Ascending aorta (tissue), 2 donors: ENCODE measurements at regions of chr9 and their contacts with region 1.

Region 1: DNA sequence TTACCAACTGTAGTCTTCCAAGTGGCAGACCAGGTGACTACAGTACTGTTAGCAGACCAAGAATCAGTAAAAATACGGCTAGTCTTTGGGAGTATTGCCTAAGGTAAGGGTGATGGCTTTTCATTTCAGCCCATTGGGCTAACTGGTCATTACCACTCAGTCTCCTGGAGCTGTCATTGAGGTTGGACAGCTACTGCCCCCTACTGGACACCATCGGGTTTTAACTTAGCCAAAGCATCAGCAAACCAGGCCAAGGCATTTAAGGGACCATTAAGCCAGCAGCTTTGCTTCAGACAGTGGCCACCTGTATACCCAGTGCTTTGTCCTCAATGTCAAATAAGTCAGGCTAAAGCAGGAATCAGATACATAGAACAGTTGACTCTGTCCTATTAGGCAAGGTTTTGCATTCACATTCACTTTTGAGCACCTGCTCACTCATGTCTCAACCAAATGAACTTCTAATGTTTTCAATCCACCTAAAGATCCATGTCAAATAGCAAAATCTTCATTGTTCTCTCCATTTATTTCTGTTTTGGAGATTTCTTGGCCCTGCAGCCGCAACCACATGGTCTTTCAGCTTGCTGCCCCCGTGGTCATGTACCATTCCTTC is 117.2 kb downstream of the INVS start:
- DNase-seq: peak in 1 of 2 donors; percentile 68
- H3K4me3 ChIP-seq: no peak overlapping the region
- H3K27ac ChIP-seq: no peak overlapping the region
- H3K4me1 ChIP-seq: no peaks in the 10 kb centered on the region
- H3K27me3 ChIP-seq: no peaks in the 10 kb centered on the region
- CTCF ChIP-seq: peak; percentile 21 to 56 (median 36)

Region 2: GRCh38 chr9:100028201-100028784 is 188.0 kb before region 1 on chr9:
- intact Hi-C with region 1: loop called (anchors 5 kb)
- DNase-seq: peak in 1 of 2 donors; percentile 77
- H3K4me3 ChIP-seq: no peak overlapping the region
- H3K27ac ChIP-seq: no peak overlapping the region
- H3K4me1 ChIP-seq: no peaks in the 10 kb centered on the region
- H3K27me3 ChIP-seq: no peaks in the 10 kb centered on the region
- CTCF ChIP-seq: peak; percentile 68 to 88 (median 86)

Region 3: DNA sequence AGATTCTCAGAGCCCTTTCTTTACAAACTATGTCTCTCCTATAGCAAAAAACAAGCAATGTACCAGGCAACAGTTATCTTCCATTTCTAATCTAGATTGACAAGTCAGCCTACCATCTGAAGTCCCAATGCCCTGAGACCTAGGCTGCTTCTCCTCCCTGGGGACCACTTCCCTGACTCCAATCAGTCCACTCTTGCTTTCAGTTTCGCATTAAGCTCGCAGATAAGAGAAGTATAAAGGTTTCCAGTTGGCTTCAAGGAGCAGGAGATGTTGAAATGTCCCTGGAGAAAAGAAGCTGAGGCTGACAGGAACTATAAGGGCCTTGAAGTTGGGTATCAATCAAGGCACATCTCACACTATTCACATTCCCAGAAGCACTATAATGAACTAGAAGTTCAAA is 149.7 kb before region 1 on chr9:
- intact Hi-C with region 1: no loop called
- DNase-seq: no peak
- H3K4me3 ChIP-seq: peak overlapping the region in 1 of 2 donors; percentile 30
- H3K27ac ChIP-seq: peak overlapping the region in 1 of 2 donors; percentile 34
- H3K4me1 ChIP-seq: peaks cover 0 to 3% of the 10 kb centered on the region in 2 donors
- H3K27me3 ChIP-seq: no peaks in the 10 kb centered on the region
- CTCF ChIP-seq: no peak

Region 4: GRCh38 chr9:100515578-100516494 is 299.6 kb after region 1 on chr9:
- intact Hi-C with region 1: no loop called
- DNase-seq: no peak
- H3K4me3 ChIP-seq: no peak overlapping the region
- H3K27ac ChIP-seq: no peak overlapping the region
- H3K4me1 ChIP-seq: no peaks in the 10 kb centered on the region
- H3K27me3 ChIP-seq: no peaks in the 10 kb centered on the region
- CTCF ChIP-seq: no peak

Region 5: DNA sequence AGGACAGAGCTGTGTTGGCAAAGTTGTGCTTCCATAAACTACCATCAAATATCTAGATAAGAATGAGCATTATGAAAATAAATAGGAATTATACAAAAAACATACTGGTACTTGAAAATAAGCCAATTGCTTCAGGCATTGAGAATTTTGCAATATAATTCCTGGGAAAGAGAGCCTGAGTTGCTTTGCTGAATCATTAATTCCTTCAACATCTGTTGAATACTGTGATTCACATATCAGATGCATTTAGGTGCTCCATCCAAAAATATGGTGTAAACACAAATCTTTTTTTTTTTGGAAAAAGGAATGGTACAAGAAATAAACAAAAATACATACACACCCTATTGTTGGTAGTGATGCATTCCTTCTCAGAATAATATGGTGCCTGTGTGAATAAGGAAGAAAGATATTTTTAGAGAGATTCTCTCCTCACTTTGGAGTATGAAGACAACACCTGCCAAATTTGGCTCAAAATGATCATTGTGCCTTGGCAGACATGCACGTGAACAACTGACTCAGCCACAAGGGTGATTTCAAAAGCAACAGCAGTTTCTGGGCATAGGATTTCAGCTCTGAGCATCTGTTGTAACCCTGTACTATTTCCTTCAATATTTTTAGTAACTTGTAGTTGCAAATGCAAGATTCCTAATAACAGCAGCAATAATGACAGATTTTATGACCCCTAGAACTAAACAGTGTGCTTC is 458.3 kb after region 1 on chr9:
- intact Hi-C with region 1: no loop called
- DNase-seq: no peak
- H3K4me3 ChIP-seq: no peak overlapping the region
- H3K27ac ChIP-seq: no peak overlapping the region
- H3K4me1 ChIP-seq: no peaks in the 10 kb centered on the region
- H3K27me3 ChIP-seq: no peaks in the 10 kb centered on the region
- CTCF ChIP-seq: no peak